ENCODE measurements at regions of chr10 and their contacts with region 1.

Region 1: GRCh38 chr10:26725837-26726727 is 28.6 kb downstream of the PDSS1 start:
- DNase-seq: peak; percentile 73
- H3K4me3 ChIP-seq: no peak overlapping the region
- H3K27ac ChIP-seq: no peak overlapping the region
- H3K4me1 ChIP-seq: peaks cover 3% of the 10 kb centered on the region
- CTCF ChIP-seq: peak; percentile 99

Region 2: DNA sequence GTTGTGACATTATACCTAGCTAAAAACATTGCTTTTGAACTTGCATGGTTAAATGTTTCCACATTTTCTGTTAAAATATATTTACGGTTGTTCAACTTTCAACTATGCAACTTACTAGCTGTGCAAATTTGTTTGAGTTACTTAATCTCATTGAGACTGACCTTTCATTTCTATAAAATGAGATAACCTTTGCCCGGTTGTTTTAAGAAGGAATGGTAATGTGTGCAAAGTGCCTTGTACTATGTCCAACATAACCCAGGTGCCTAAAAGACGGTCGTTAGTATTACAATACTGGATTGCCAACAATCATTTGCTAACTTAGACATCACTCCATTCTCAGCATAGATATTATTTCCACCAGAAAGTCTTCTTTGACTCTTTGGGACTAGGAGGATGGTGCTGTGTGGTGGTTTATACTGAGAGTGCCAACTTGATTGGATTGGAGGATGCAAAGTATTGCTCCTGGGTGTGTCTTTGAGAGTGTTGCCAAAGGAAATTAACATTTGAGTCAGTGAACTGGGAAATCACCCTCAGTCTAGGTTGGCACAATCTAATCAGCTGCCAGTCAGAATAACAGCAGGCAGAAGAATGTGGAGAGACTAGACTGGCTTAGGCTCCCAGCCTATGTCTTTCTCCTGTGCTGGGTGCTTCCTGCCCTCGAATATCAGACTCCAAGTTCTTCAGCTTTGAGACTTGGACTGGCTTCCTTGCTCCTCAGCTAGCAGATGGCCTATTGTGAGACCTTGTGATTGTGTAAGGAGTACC is 113.7 kb before region 1 on chr10:
- CTCF ChIA-PET with region 1: no interaction called
- POLR2A ChIA-PET with region 1: no interaction called
- intact Hi-C with region 1: loop called (anchors 5 kb)
- DNase-seq: no peak
- H3K4me3 ChIP-seq: no peak overlapping the region
- H3K27ac ChIP-seq: no peak overlapping the region
- H3K4me1 ChIP-seq: no peaks in the 10 kb centered on the region
- CTCF ChIP-seq: no peak

Measured in OCI-LY7 (cell line).